ENCODE measurements at regions of chr11 and their contacts with region 1.

Region 1: GRCh38 chr11:34357701-34358257 is at the start of gene ABTB2:
- DNase-seq: peak; percentile 93 to 95 (median 93)
- H3K4me3 ChIP-seq: peak within 1 kb of the TSS; percentile 55 to 86 (median 81)
- H3K4me3 Mint-ChIP-seq: peak within 1 kb of the TSS; percentile 82 to 97
- H3K27ac ChIP-seq: peak within 1 kb of the TSS in 1 of 2 donors; percentile 40
- H3K27ac Mint-ChIP-seq: peak within 1 kb of the TSS in 6 of 7 donors; percentile 26 to 70 (median 63)
- H3K4me1 ChIP-seq: peaks cover 30 to 39% of the 10 kb centered on the region in 2 donors
- H3K4me1 Mint-ChIP-seq: peaks cover 33% of the 10 kb centered on the region
- H3K27me3 ChIP-seq: peaks cover 13 to 18% of the 10 kb centered on the region in 2 donors
- H3K27me3 Mint-ChIP-seq: peaks cover 22 to 43% (median 27%) of the 10 kb centered on the region in 3 donors
- CTCF ChIP-seq: no peak
- polyA plus RNA-seq, gene ABTB2: 0.25 to 1.7 (median 0.26) TPM

Region 2: DNA sequence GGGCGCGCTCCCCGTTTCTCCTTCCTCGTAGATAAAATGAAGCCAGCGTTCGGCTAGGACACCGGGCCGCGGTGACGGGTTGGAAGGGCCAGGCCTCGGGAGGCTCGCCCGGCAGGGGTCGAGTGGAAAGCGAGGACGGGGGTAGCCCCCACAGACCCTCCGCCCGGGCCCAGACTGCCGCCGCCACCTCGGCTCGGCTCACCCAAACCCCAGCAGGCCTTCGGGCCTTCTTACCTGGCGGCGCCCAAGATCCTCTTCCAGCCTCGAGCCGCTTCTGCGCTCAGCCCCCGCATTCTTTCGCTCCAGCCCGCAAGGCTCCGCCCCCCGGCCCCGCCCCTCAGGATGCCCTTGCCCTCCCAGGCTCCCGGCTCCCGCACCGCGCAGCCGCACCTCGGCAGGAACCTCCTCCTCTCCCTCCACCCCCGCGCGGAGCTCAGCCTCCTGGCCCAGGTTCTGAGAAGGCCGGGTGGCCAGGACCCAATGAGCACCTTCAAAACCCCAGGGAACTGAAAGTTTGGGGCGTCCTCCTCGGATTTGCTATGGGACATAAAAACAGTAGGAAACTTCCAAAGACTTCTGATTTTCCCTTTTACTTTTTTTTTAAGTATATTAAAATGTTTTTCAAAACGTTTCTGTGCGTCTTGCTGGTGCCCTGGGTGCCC is 621.5 kb before region 1 on chr11 and contains the start of gene CD59:
- intact Hi-C with region 1: no loop called
- DNase-seq: peak; percentile 44 to 65 (median 53)
- H3K4me3 ChIP-seq: peak within 1 kb of the TSS; percentile 55 to 83 (median 76)
- H3K4me3 Mint-ChIP-seq: peak within 1 kb of the TSS; percentile 87 to 94
- H3K27ac ChIP-seq: peak within 1 kb of the TSS in 1 of 2 donors; percentile 12
- H3K27ac Mint-ChIP-seq: peak within 1 kb of the TSS in 4 of 7 donors; percentile 2 to 78 (median 50)
- H3K4me1 ChIP-seq: peaks cover 35 to 41% of the 10 kb centered on the region in 2 donors
- H3K4me1 Mint-ChIP-seq: peaks cover 38% of the 10 kb centered on the region
- H3K27me3 ChIP-seq: peaks cover 11 to 30% of the 10 kb centered on the region in 2 donors
- H3K27me3 Mint-ChIP-seq: peaks cover 30 to 43% (median 33%) of the 10 kb centered on the region in 3 donors
- CTCF ChIP-seq: no peak
- polyA plus RNA-seq, gene CD59: 3.7 to 34.9 (median 21.1) TPM

Region 3: DNA sequence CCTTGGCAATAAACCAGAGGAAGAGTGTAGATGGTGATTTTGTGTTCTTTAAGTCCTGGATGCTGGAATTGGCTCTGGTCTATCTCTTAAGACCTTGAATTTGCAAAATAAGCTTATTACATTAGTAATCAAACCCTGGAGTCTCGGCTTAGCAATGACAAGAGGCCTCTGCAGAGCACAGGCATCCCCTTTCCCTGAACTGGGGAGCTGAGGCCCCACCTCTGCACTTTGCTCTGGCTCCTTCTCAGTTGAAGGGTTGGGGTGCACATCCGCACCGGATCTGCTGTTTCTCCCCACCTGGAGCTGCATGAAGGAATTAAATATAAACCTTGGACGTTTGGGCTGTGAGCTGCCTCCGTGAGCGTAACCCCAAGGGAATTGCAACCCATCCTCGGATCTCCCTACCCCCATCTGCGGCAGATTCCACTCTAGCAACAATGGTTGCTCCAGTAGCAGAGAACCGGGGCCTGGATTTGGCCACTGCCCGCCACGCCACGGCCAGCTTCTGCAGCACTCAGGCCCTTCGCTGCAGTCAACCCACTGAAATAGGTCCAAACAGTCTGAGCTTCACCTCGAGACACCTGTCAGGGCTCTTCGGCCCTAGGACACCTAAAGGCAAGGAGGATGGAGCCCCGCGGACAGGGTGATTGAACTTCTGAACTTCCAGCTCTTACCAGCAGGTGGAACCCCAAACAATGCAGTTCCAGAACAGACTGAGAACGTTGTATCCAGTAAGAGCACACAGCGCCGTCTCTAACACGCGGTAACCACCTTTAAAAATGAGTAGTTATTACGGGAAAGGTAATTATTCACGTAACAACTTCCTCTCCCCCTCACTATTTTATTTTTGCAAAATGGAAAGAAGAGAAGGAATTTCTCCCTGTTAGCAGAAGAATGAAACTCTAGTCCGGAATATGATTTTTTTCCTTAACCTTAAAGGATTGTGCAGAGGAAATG is 361.0 kb before region 1 on chr11:
- intact Hi-C with region 1: loop called (anchors 5 to 10 kb)
- DNase-seq: peak; percentile 48 to 70 (median 68)
- H3K4me3 ChIP-seq: no peak overlapping the region
- H3K4me3 Mint-ChIP-seq: peak overlapping the region in 1 of 2 donors; percentile 52
- H3K27ac ChIP-seq: no peak overlapping the region
- H3K27ac Mint-ChIP-seq: no peak overlapping the region
- H3K4me1 ChIP-seq: no peaks in the 10 kb centered on the region
- H3K4me1 Mint-ChIP-seq: peaks cover 8% of the 10 kb centered on the region
- H3K27me3 ChIP-seq: peaks cover 0 to 14% of the 10 kb centered on the region in 2 donors
- H3K27me3 Mint-ChIP-seq: peaks cover 10 to 20% (median 19%) of the 10 kb centered on the region in 3 donors
- CTCF ChIP-seq: peak; percentile 90

Region 4: DNA sequence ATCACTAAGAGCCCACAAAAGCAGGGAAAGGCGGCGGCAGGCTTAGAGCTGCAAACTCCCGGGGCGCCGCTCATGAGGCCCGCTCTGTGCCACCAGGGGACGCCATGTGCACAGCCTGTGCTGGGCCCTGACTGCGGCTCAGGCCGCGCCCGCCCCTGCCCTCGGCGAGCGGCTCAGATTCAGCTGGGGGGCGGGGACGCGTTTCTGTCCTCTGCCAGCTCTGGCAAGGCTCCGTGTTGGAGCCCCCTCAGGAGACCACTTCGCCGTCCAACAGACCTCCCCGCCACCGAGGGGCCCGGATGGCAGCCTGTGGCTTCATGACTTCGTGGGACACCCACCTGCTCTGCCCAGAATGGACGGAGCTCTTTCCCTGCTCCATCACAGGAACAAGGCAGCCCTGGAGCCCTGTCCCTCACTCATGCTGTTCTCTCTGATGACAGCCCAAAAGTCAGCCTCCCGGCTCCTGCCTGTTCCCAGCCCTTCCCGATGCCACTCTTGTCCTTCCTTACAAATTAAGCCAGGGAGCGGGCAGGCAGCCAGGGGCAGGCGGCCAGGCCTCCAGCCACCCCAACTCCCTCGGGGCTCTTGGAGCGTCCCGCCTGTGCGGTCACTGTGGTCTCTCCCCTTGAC is 183.3 kb before region 1 on chr11:
- intact Hi-C with region 1: loop called (anchors 1 to 2 kb)
- DNase-seq: peak; percentile 57 to 75 (median 69)
- H3K4me3 ChIP-seq: peak overlapping the region in 1 of 3 experiments; percentile 51
- H3K4me3 Mint-ChIP-seq: peak overlapping the region; percentile 74 to 91
- H3K27ac ChIP-seq: no peak overlapping the region
- H3K27ac Mint-ChIP-seq: peak overlapping the region in 1 of 7 donors; percentile 41
- H3K4me1 ChIP-seq: peaks cover 9 to 11% of the 10 kb centered on the region in 2 donors
- H3K4me1 Mint-ChIP-seq: peaks cover 11% of the 10 kb centered on the region
- H3K27me3 ChIP-seq: no peaks in the 10 kb centered on the region
- H3K27me3 Mint-ChIP-seq: peaks cover 0 to 7% (median 0%) of the 10 kb centered on the region in 3 donors
- CTCF ChIP-seq: peak; percentile 92

Region 5: GRCh38 chr11:34208266-34209135 is 149.3 kb before region 1 on chr11:
- intact Hi-C with region 1: no loop called
- DNase-seq: peak; percentile 88 to 95 (median 90)
- H3K4me3 ChIP-seq: peak overlapping the region in 1 of 3 experiments; percentile 37
- H3K4me3 Mint-ChIP-seq: peak overlapping the region in 1 of 2 donors; percentile 33
- H3K27ac ChIP-seq: peak overlapping the region; percentile 34 to 81
- H3K27ac Mint-ChIP-seq: peak overlapping the region; percentile 55 to 86 (median 83)
- H3K4me1 ChIP-seq: peaks cover 37 to 40% of the 10 kb centered on the region in 2 donors
- H3K4me1 Mint-ChIP-seq: peaks cover 43% of the 10 kb centered on the region
- H3K27me3 ChIP-seq: no peaks in the 10 kb centered on the region
- H3K27me3 Mint-ChIP-seq: no peaks in the 10 kb centered on the region
- CTCF ChIP-seq: no peak

Region 6: GRCh38 chr11:34288492-34288891 is 69.3 kb before region 1 on chr11:
- intact Hi-C with region 1: no loop called
- DNase-seq: no peak
- H3K4me3 ChIP-seq: no peak overlapping the region
- H3K4me3 Mint-ChIP-seq: no peak overlapping the region
- H3K27ac ChIP-seq: no peak overlapping the region
- H3K27ac Mint-ChIP-seq: no peak overlapping the region
- H3K4me1 ChIP-seq: no peaks in the 10 kb centered on the region
- H3K4me1 Mint-ChIP-seq: no peaks in the 10 kb centered on the region
- H3K27me3 ChIP-seq: no peaks in the 10 kb centered on the region
- H3K27me3 Mint-ChIP-seq: peaks cover 0 to 5% (median 2%) of the 10 kb centered on the region in 3 donors
- CTCF ChIP-seq: no peak

Region 7: DNA sequence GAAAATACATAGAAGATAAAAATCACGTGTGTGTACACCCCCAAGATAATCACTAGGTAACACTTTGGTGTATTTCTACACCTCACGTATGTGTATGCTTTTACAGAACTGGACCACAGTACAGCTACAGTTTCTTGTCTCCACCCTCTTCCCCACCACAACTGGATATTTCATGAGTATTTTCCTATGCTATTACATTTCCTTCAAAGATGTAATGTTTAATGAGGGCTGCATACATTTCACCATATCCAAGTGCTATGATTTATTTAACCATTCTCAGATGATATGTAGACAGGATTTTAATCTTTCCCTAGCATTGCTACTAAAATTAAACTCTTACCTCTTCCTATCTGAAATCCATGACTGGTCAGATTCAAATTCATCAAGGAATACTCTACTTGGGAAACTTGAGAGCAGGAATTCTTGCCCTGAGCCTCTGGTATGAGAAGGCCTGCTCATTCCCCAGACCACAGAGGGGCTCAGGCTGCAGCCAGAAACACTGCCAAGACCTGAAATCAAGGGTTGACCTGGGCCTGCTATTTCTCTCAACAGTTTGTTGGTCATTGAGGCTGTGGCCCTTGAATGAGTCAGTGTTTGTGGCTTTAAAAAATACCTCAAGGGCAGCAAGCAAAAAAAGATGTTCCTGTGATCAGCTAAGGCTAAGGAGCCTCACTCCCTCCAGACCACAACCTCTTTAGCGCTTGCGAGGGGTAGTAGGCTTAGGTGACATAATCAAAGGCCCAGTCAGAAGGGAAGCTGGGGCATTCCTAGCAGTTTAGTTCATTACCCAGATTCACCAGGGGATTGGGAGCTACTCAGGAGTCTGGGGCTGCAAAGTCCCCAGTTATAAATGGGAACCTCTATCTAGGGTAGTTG is 55.5 kb before region 1 on chr11:
- intact Hi-C with region 1: loop called (anchors 5 to 10 kb)
- DNase-seq: peak in 1 of 3 donors; percentile 52
- H3K4me3 ChIP-seq: no peak overlapping the region
- H3K4me3 Mint-ChIP-seq: no peak overlapping the region
- H3K27ac ChIP-seq: peak overlapping the region in 1 of 2 donors; percentile 81
- H3K27ac Mint-ChIP-seq: peak overlapping the region in 2 of 7 donors; percentile 26 to 37
- H3K4me1 ChIP-seq: peaks cover 31 to 33% of the 10 kb centered on the region in 2 donors
- H3K4me1 Mint-ChIP-seq: peaks cover 32% of the 10 kb centered on the region
- H3K27me3 ChIP-seq: no peaks in the 10 kb centered on the region
- H3K27me3 Mint-ChIP-seq: no peaks in the 10 kb centered on the region
- CTCF ChIP-seq: no peak

Region 8: DNA sequence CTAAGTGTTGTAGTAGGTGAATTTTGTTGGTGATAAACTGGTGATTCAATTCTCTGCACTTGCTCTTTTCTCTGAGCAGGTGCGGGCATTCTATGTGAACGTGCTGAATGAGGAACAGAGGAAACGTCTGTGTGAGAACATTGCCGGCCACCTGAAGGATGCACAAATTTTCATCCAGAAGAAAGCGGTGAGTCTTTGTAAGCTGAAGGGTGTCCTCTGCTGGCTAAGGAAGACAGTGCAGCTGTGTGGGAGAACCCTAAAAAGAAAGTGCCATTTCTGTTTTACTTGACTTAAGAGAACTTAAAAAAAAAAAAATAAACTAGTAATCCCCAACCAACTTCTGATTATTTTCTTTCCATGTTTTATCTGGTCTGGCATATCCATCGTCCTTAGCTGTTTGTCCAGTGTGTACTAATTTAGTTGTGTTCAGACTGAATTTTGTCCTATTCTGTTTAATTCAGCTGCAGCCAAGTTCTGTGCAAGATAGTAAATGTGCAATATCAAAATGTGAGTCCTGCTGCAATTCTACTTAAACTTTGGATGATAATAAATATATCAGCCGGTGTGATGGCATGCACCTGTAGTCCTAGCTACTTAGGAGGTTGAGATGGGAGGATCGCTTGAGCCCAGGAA is 110.5 kb after region 1 on chr11:
- intact Hi-C with region 1: loop called in 1 of 2 experiments (anchors 5 kb)
- DNase-seq: peak; percentile 33 to 46 (median 43)
- H3K4me3 ChIP-seq: no peak overlapping the region
- H3K4me3 Mint-ChIP-seq: no peak overlapping the region
- H3K27ac ChIP-seq: no peak overlapping the region
- H3K27ac Mint-ChIP-seq: peak overlapping the region in 1 of 7 donors; percentile 30
- H3K4me1 ChIP-seq: peaks cover 0 to 10% of the 10 kb centered on the region in 2 donors
- H3K4me1 Mint-ChIP-seq: peaks cover 7% of the 10 kb centered on the region
- H3K27me3 ChIP-seq: no peaks in the 10 kb centered on the region
- H3K27me3 Mint-ChIP-seq: no peaks in the 10 kb centered on the region
- CTCF ChIP-seq: peak; percentile 91

Region 9: DNA sequence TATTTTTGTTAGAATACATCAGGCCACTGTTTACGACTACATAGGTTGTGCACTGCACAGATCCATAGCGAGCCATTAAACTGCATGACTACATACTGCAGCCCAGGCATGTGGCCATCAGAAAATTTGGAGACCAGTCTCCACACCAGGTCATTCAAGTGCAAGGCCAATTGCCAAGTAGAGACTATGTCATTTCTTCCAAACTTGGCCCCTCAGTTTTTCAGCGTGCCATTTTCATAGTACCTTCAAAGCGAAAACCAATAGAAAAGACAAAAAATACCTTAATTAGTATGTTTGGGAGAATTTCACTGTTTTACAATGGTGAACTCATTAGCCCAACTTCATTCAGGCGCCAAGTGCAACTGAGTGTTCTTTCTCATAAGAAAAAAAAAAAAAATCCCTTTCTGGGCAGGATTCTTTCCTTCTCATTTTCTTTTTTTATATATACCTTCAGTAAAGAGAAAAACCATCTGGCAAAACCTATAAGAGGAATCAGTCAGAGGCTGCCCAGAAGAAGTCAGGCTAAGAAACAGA is 1137.2 kb after region 1 on chr11:
- intact Hi-C with region 1: no loop called
- DNase-seq: no peak
- H3K4me3 ChIP-seq: no peak overlapping the region
- H3K4me3 Mint-ChIP-seq: no peak overlapping the region
- H3K27ac ChIP-seq: no peak overlapping the region
- H3K27ac Mint-ChIP-seq: no peak overlapping the region
- H3K4me1 ChIP-seq: no peaks in the 10 kb centered on the region
- H3K4me1 Mint-ChIP-seq: no peaks in the 10 kb centered on the region
- H3K27me3 ChIP-seq: peaks cover 0 to 2% of the 10 kb centered on the region in 2 donors
- H3K27me3 Mint-ChIP-seq: peaks cover 0 to 3% (median 3%) of the 10 kb centered on the region in 3 donors
- CTCF ChIP-seq: no peak